PC-9 (cell line): ENCODE measurements at regions of chr10 and their contacts with region 1.

Region 1: GRCh38 chr10:72038458-72039001 is 49.8 kb downstream of the SPOCK2 start:
- DNase-seq: no peak
- H3K4me3 ChIP-seq: no peak overlapping the region
- H3K27ac ChIP-seq: no peak overlapping the region
- H3K4me1 ChIP-seq: peaks cover 22% of the 10 kb centered on the region
- H3K27me3 ChIP-seq: no peaks in the 10 kb centered on the region
- CTCF ChIP-seq: no peak

Region 2: DNA sequence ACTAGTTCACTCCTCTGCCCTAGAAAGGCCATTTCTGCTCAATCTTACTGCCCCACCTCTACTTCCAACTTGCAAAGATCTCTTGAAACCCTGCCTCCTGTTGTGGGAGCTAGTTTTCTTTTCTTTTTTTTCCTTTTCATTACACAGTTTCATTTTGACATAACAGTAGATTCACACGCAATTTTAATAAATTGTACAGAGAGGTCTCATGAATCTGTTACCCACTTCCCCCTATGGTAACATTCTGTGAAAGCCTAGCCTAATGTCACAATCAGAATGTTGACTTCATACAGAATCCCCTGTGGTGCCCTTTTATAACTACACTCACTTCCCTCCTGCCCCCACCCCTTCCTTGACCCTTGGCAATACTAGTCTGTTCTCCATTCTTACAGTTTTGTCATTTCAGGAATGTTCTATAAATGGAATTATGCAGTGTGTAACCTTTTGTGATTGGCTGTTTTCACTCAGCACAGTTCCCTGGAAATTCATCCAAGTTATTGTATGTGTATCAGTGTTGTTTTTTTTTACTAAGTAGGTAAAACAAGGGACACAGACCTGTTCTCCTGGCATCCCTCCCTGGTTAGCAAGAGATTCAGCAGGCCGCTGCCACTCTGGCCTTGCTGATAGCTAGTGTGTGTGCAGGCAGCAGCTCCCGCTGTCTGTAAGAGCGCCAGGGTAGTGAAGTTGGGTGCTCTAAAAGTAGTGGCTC is 52.8 kb before region 1 on chr10:
- CTCF ChIA-PET with region 1: no interaction called
- POLR2A ChIA-PET with region 1: interaction called, 12 read pairs
- intact Hi-C with region 1: no loop called
- DNase-seq: no peak
- H3K4me3 ChIP-seq: no peak overlapping the region
- H3K27ac ChIP-seq: no peak overlapping the region
- H3K4me1 ChIP-seq: peaks cover 8% of the 10 kb centered on the region
- H3K27me3 ChIP-seq: no peaks in the 10 kb centered on the region
- CTCF ChIP-seq: no peak

Region 3: GRCh38 chr10:72455889-72456595 is 417.5 kb after region 1 on chr10:
- CTCF ChIA-PET with region 1: no interaction called
- POLR2A ChIA-PET with region 1: no interaction called
- intact Hi-C with region 1: no loop called
- DNase-seq: no peak
- H3K4me3 ChIP-seq: no peak overlapping the region
- H3K27ac ChIP-seq: no peak overlapping the region
- H3K4me1 ChIP-seq: no peaks in the 10 kb centered on the region
- H3K27me3 ChIP-seq: no peaks in the 10 kb centered on the region
- CTCF ChIP-seq: no peak